HepG2 (cell line): ENCODE measurements at regions of chr10 and their contacts with region 1.

Region 1: GRCh38 chr10:89391917-89392756 is at the start of gene IFIT1:
- DNase-seq: peak; percentile 82
- ATAC-seq: peak; percentile 95
- H3K4me3 ChIP-seq: peak within 1 kb of the TSS; percentile 68 to 88 (median 78)
- H3K27ac ChIP-seq: peak within 1 kb of the TSS; percentile 66
- H3K4me1 ChIP-seq: peaks cover 10% of the 10 kb centered on the region
- H3K27me3 ChIP-seq: no peaks in the 10 kb centered on the region
- CTCF ChIP-seq: no peak
- EP300 ChIP-seq: no peak
- POLR2A ChIP-seq: 0 out of 4 replicates have a peak, but pooled peaks of 1 of the 2 experiments have one; percentile 32
- RAD21 ChIP-seq: no peak
- total RNA-seq, gene IFIT1: 5.5 and 7.5 TPM in 2 replicates

Region 2: GRCh38 chr10:89296220-89296648 is 95.9 kb before region 1 on chr10:
- CTCF ChIA-PET with region 1: interaction called, 4 read pairs
- POLR2A ChIA-PET with region 1: no interaction called
- in situ Hi-C with region 1: no loop called
- intact Hi-C with region 1: loop called (anchors 1 kb)
- DNase-seq: no peak
- ATAC-seq: no peak
- H3K4me3 ChIP-seq: no peak overlapping the region
- H3K27ac ChIP-seq: no peak overlapping the region
- H3K4me1 ChIP-seq: peaks cover 3% of the 10 kb centered on the region
- H3K27me3 ChIP-seq: no peaks in the 10 kb centered on the region
- CTCF ChIP-seq: no peak
- EP300 ChIP-seq: no peak
- POLR2A ChIP-seq: no peak
- RAD21 ChIP-seq: no peak

Region 3: GRCh38 chr10:89367529-89367928 is 24.6 kb before region 1 on chr10:
- CTCF ChIA-PET with region 1: no interaction called
- POLR2A ChIA-PET with region 1: no interaction called
- in situ Hi-C with region 1: no loop called
- intact Hi-C with region 1: no loop called
- DNase-seq: no peak
- ATAC-seq: no peak
- H3K4me3 ChIP-seq: no peak overlapping the region
- H3K27ac ChIP-seq: no peak overlapping the region
- H3K4me1 ChIP-seq: peaks cover 11% of the 10 kb centered on the region
- H3K27me3 ChIP-seq: no peaks in the 10 kb centered on the region
- CTCF ChIP-seq: no peak
- EP300 ChIP-seq: no peak
- POLR2A ChIP-seq: no peak
- RAD21 ChIP-seq: no peak

Region 4: DNA sequence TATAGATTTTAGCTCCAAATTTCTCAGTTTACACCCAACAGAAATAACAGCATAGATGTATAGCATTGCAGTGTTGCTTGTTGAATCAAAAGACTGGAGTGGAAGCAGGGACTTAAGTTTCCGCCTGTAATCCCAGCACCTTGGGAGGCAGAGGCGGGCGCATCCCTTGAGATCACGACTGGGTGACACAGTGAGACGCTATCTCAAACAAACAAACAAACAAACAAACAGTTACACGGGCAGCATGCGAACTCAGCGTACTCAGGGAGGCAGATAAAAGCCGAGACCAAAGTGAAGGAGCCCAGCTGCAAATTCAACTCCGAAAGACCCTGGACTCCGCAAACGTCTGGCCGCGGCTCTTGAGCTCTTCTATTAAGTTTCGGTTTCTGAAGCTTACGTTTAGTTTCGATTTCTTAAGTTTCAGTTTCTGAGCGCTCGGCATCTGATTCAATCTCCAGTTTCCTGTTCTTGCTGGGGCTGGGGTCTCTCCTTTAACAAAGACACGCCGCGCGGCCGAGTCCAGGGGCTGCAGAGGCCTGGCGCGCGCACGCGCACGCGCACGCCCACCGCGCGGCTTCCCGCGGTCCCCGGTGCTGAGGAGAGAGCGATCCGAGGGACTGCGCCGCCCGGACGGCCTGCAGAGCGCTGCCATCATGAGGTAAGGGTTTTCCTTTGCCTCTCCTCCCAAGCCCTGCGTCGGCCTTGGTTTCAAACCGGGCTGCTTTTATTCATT is 22.2 kb after region 1 on chr10 and contains the start of gene IFIT5:
- CTCF ChIA-PET with region 1: no interaction called
- POLR2A ChIA-PET with region 1: interaction called, 13 read pairs
- in situ Hi-C with region 1: no loop called
- intact Hi-C with region 1: loop called (anchors 1 kb)
- DNase-seq: peak; percentile 30
- ATAC-seq: peak; percentile 95
- H3K4me3 ChIP-seq: peak within 1 kb of the TSS; percentile 74 to 95 (median 83)
- H3K27ac ChIP-seq: peak within 1 kb of the TSS; percentile 63
- H3K4me1 ChIP-seq: peaks cover 26% of the 10 kb centered on the region
- H3K27me3 ChIP-seq: no peaks in the 10 kb centered on the region; a peak in 1 of 5 replicates
- CTCF ChIP-seq: peak; percentile 22; the same call in 1 of the 2 replicates
- EP300 ChIP-seq: no peak
- POLR2A ChIP-seq: peak in 1 of 2 experiments; percentile 61; a peak in 2 of 4 replicates
- RAD21 ChIP-seq: no peak
- total RNA-seq, gene IFIT5: 8.3 and 12.5 TPM in 2 replicates